Body of pancreas (tissue), 4 donors: ENCODE measurements at regions of chr19 and their contacts with region 1.

Region 1: DNA sequence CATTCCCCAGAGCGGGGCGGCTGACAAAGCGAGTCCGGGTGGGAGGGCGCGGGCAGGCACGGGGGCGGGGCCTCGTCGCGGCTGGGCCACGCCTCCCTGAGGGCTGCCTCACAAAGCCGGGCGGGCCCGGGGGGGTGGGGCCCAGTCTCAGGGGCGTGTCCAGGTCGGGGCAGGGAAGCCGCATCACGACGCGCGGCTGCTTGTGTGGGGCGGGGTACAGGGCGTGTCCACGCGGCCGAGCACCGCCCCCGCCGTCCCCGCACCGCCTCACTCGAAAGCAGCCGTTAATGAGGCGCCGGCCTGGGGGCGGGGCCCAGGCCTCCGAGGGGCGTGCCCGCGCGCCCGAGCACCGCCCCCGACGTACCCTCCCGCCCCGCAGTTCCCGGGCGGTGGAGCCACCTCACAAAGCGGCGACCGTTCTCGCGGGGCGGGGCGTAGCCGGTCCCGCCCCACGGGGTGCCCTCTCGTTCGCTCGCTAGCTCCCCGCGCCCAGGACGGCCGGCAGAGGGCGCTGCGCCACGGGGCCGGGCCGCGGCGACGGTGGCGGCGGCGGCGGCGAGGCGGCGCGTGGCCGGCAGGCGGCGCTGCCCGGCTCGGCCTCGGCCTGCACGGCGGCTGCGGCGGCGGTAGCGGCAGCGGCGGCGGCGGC is at the start of gene CARM1:
- DNase-seq: peak; percentile 99 to 100 (median 100)
- ATAC-seq: peak; percentile 90
- H3K4me3 ChIP-seq: peak within 1 kb of the TSS; percentile 29 to 80
- H3K27ac ChIP-seq: peak within 1 kb of the TSS; percentile 62 to 78 (median 74)
- H3K4me1 ChIP-seq: peaks cover 21% of the 10 kb centered on the region
- H3K27me3 ChIP-seq: no peaks in the 10 kb centered on the region
- CTCF ChIP-seq: peak; percentile 39 to 100 (median 68)
- POLR2A ChIP-seq: no peak
- total RNA-seq, gene CARM1: 6.3 to 11.7 TPM

Region 2: DNA sequence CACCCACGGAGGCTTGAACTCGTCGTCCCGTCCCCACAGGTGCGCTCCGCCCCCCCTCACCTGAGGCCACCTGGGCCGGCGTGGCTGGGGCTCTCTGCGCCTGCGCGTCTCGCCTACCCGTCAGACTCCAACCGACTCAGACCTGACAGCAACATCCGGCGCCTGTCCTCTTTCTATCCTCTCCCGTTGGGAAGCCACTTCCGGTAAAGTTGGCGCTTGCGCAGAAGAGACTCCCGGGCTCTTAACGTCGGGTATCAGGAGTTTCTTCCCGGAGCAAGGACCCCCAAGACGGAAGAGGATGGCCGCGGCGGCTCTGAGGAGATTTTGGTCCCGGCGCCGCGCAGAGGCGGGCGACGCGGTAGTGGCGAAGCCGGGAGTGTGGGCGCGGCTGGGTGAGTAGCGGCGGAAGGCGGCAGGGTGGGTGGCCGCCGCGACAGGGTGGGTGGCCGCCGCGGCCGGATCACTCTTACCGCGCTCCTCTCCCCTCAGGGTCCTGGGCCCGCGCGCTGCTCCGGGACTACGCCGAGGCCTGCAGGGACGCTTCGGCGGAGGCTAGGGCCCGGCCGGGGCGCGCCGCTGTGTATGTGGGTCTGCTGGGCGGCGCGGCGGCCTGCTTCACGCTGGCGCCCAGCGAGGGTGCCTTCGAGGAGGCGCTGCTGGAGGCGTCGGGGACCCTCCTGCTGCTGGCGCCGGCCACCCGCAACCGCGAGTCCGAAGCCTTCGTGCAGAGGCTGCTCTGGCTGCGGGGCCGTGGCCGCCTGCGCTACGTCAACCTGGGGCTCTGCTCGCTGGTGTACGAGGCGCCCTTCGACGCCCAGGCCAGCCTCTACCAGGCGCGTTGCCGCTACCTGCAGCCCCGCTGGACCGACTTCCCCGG is 57.7 kb after region 1 on chr19 and contains the starts of genes TIMM29 and YIPF2:
- intact Hi-C with region 1: loop called (anchors 10 kb)
- DNase-seq: peak; percentile 99 to 100 (median 100)
- ATAC-seq: peak; percentile 97
- H3K4me3 ChIP-seq: peak within 1 kb of the TSS; percentile 30 to 97
- H3K27ac ChIP-seq: peak within 1 kb of the TSS; percentile 54 to 83 (median 76)
- H3K4me1 ChIP-seq: peaks cover 32% of the 10 kb centered on the region
- H3K27me3 ChIP-seq: no peaks in the 10 kb centered on the region
- CTCF ChIP-seq: peak in 1 of 7 experiments; percentile 20
- POLR2A ChIP-seq: peak; percentile 25 to 77 (median 73)
- total RNA-seq, gene TIMM29: 26.5 to 34.6 TPM
- total RNA-seq, gene YIPF2: 52.7 to 55.3 TPM